Upper lobe of right lung (tissue), 1 donor: ENCODE measurements at regions of chr17 and their contacts with region 1.

Region 1: GRCh38 chr17:29771551-29771950 is 148.8 kb upstream of the CORO6 start:
- DNase-seq: no peak
- ATAC-seq: no peak
- H3K4me3 ChIP-seq: no peak overlapping the region
- H3K27ac ChIP-seq: no peak overlapping the region
- H3K4me1 ChIP-seq: no peaks in the 10 kb centered on the region
- H3K27me3 ChIP-seq: no peaks in the 10 kb centered on the region
- CTCF ChIP-seq: no peak

Region 2: GRCh38 chr17:29633886-29634285 is 137.7 kb before region 1 on chr17:
- intact Hi-C with region 1: loop called (anchors 10 kb)
- DNase-seq: no peak
- ATAC-seq: no peak
- H3K4me3 ChIP-seq: no peak overlapping the region
- H3K27ac ChIP-seq: no peak overlapping the region
- H3K4me1 ChIP-seq: peaks cover under 1% of the 10 kb centered on the region
- H3K27me3 ChIP-seq: no peaks in the 10 kb centered on the region
- CTCF ChIP-seq: no peak

Region 3: GRCh38 chr17:30244853-30245385 is 473.4 kb after region 1 on chr17:
- intact Hi-C with region 1: no loop called
- DNase-seq: no peak
- ATAC-seq: no peak
- H3K4me3 ChIP-seq: no peak overlapping the region
- H3K27ac ChIP-seq: no peak overlapping the region
- H3K4me1 ChIP-seq: no peaks in the 10 kb centered on the region
- H3K27me3 ChIP-seq: no peaks in the 10 kb centered on the region
- CTCF ChIP-seq: no peak